PC-9 (cell line): ENCODE measurements at regions of chr1 and their contacts with region 1.

Region 1: DNA sequence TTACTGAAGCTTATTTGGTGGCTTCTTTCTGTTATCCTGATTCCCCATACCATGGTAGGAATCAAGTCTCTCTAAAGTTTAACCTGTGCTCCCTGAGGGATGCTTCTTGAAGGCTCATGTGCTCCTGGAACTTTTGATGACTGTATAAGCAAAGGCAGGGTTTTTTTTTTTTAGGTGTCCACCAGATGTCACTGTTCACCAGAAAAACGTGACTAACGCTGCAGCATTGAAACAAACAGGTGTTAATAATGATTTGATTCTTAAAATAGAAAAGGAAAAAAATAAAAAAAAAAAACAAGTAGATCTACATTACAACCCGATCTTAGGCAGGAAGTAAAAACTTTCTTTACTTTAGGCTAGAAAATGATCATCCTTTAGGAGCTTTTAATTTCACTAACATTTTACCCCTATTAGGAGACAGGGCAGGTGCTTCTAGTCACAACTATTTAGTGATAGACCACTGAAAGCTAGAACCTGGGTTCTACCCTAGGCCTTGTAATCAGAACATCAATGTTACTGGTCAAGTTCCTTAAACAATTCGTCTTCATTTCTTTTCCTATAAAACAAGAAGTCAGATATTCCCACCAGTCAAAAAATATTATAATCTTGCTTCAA is 223.0 kb downstream of the PLA2G4A start:
- DNase-seq: peak; percentile 21 to 39
- H3K4me3 ChIP-seq: no peak overlapping the region
- H3K27ac ChIP-seq: no peak overlapping the region
- H3K4me1 ChIP-seq: no peaks in the 10 kb centered on the region
- H3K27me3 ChIP-seq: no peaks in the 10 kb centered on the region
- CTCF ChIP-seq: peak; percentile 73

Region 2: GRCh38 chr1:187096689-187097088 is 45.0 kb after region 1 on chr1:
- CTCF ChIA-PET with region 1: no interaction called
- POLR2A ChIA-PET with region 1: no interaction called
- intact Hi-C with region 1: no loop called
- DNase-seq: no peak
- H3K4me3 ChIP-seq: no peak overlapping the region
- H3K27ac ChIP-seq: no peak overlapping the region
- H3K4me1 ChIP-seq: no peaks in the 10 kb centered on the region
- H3K27me3 ChIP-seq: no peaks in the 10 kb centered on the region
- CTCF ChIP-seq: no peak

Region 3: GRCh38 chr1:187264995-187265602 is 213.4 kb after region 1 on chr1:
- CTCF ChIA-PET with region 1: no interaction called
- POLR2A ChIA-PET with region 1: no interaction called
- intact Hi-C with region 1: loop called (anchors 10 kb)
- DNase-seq: peak in 1 of 2 experiments; percentile 25
- H3K4me3 ChIP-seq: no peak overlapping the region
- H3K27ac ChIP-seq: no peak overlapping the region
- H3K4me1 ChIP-seq: no peaks in the 10 kb centered on the region
- H3K27me3 ChIP-seq: no peaks in the 10 kb centered on the region
- CTCF ChIP-seq: peak; percentile 67

Region 4: GRCh38 chr1:187408212-187409003 is 356.7 kb after region 1 on chr1:
- CTCF ChIA-PET with region 1: no interaction called
- POLR2A ChIA-PET with region 1: no interaction called
- intact Hi-C with region 1: loop called (anchors 1 kb)
- DNase-seq: peak in 1 of 2 experiments; percentile 22
- H3K4me3 ChIP-seq: no peak overlapping the region
- H3K27ac ChIP-seq: no peak overlapping the region
- H3K4me1 ChIP-seq: no peaks in the 10 kb centered on the region
- H3K27me3 ChIP-seq: no peaks in the 10 kb centered on the region
- CTCF ChIP-seq: no peak

Region 5: GRCh38 chr1:188822248-188822647 is 1770.5 kb after region 1 on chr1:
- CTCF ChIA-PET with region 1: no interaction called
- POLR2A ChIA-PET with region 1: no interaction called
- intact Hi-C with region 1: no loop called
- DNase-seq: no peak
- H3K4me3 ChIP-seq: no peak overlapping the region
- H3K27ac ChIP-seq: no peak overlapping the region
- H3K4me1 ChIP-seq: no peaks in the 10 kb centered on the region
- H3K27me3 ChIP-seq: no peaks in the 10 kb centered on the region
- CTCF ChIP-seq: no peak